ENCODE measurements at regions of chr6 and their contacts with region 1.

Region 1: GRCh38 chr6:25017932-25018567 is 82.3 kb upstream of the RIPOR2 start:
- DNase-seq: peak; percentile 94
- ATAC-seq: peak; percentile 80
- H3K4me3 Mint-ChIP-seq: peak overlapping the region; percentile 11
- H3K27ac Mint-ChIP-seq: peak overlapping the region; percentile 76
- H3K4me1 Mint-ChIP-seq: peaks cover 51% of the 10 kb centered on the region
- H3K27me3 Mint-ChIP-seq: no peaks in the 10 kb centered on the region
- CTCF ChIP-seq: peak; percentile 84

Region 2: GRCh38 chr6:24720604-24721460 is 297.2 kb before region 1 on chr6:
- CTCF ChIA-PET with region 1: interaction called, 4 read pairs
- POLR2A ChIA-PET with region 1: no interaction called
- intact Hi-C with region 1: loop called (anchors 5 kb)
- DNase-seq: peak; percentile 100
- ATAC-seq: peak; percentile 86
- H3K4me3 Mint-ChIP-seq: peak overlapping the region; percentile 98
- H3K27ac Mint-ChIP-seq: peak overlapping the region; percentile 94
- H3K4me1 Mint-ChIP-seq: peaks cover 28% of the 10 kb centered on the region
- H3K27me3 Mint-ChIP-seq: no peaks in the 10 kb centered on the region
- CTCF ChIP-seq: no peak

Region 3: DNA sequence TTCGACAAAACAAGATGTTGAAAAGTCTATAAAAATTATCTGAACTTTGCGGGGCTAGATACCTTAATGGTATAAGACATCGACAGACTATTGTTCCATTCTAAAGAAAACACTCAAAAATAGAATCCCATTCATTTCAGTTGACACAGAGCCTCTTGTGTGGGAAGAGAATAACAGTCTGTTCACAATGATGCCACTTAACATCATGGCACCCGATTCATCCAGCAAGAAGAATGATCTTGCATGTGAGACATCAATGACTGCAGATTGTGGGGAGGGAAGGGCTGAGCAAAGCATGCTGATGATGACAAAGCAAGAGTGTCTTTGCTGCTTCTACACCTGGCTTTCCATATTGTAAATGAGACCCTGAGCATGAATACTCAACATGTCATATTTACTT is 169.6 kb before region 1 on chr6:
- CTCF ChIA-PET with region 1: interaction called, 20 read pairs
- POLR2A ChIA-PET with region 1: no interaction called
- intact Hi-C with region 1: no loop called
- DNase-seq: no peak
- ATAC-seq: no peak
- H3K4me3 Mint-ChIP-seq: no peak overlapping the region
- H3K27ac Mint-ChIP-seq: peak overlapping the region; percentile 31
- H3K4me1 Mint-ChIP-seq: peaks cover 48% of the 10 kb centered on the region
- H3K27me3 Mint-ChIP-seq: no peaks in the 10 kb centered on the region
- CTCF ChIP-seq: no peak

Region 4: GRCh38 chr6:24902782-24903181 is 115.3 kb before region 1 on chr6:
- CTCF ChIA-PET with region 1: interaction called, 16 read pairs
- POLR2A ChIA-PET with region 1: no interaction called
- intact Hi-C with region 1: no loop called
- DNase-seq: no peak
- ATAC-seq: no peak
- H3K4me3 Mint-ChIP-seq: no peak overlapping the region
- H3K27ac Mint-ChIP-seq: peak overlapping the region; percentile 87
- H3K4me1 Mint-ChIP-seq: peaks cover 90% of the 10 kb centered on the region
- H3K27me3 Mint-ChIP-seq: no peaks in the 10 kb centered on the region
- CTCF ChIP-seq: no peak

Region 5: GRCh38 chr6:25006565-25007001 is 11.5 kb before region 1 on chr6:
- CTCF ChIA-PET with region 1: interaction called, 24 read pairs
- POLR2A ChIA-PET with region 1: interaction called, 3 read pairs
- intact Hi-C with region 1: no loop called
- DNase-seq: peak; percentile 75
- ATAC-seq: peak; percentile 72
- H3K4me3 Mint-ChIP-seq: peak overlapping the region; percentile 52
- H3K27ac Mint-ChIP-seq: peak overlapping the region; percentile 94
- H3K4me1 Mint-ChIP-seq: peaks cover 82% of the 10 kb centered on the region
- H3K27me3 Mint-ChIP-seq: no peaks in the 10 kb centered on the region
- CTCF ChIP-seq: no peak

Region 6: GRCh38 chr6:25070547-25071366 is 52.7 kb after region 1 on chr6:
- CTCF ChIA-PET with region 1: interaction called, 44 read pairs
- POLR2A ChIA-PET with region 1: no interaction called
- intact Hi-C with region 1: no loop called
- DNase-seq: peak; percentile 92
- ATAC-seq: peak; percentile 99
- H3K4me3 Mint-ChIP-seq: peak overlapping the region; percentile 68
- H3K27ac Mint-ChIP-seq: peak overlapping the region; percentile 94
- H3K4me1 Mint-ChIP-seq: peaks cover 6% of the 10 kb centered on the region
- H3K27me3 Mint-ChIP-seq: no peaks in the 10 kb centered on the region
- CTCF ChIP-seq: peak; percentile 87

Region 7: GRCh38 chr6:25088513-25088912 is 70.5 kb after region 1 on chr6:
- CTCF ChIA-PET with region 1: no interaction called
- POLR2A ChIA-PET with region 1: no interaction called
- intact Hi-C with region 1: no loop called
- DNase-seq: no peak
- ATAC-seq: no peak
- H3K4me3 Mint-ChIP-seq: no peak overlapping the region
- H3K27ac Mint-ChIP-seq: no peak overlapping the region
- H3K4me1 Mint-ChIP-seq: peaks cover 19% of the 10 kb centered on the region
- H3K27me3 Mint-ChIP-seq: no peaks in the 10 kb centered on the region
- CTCF ChIP-seq: no peak

Region 8: DNA sequence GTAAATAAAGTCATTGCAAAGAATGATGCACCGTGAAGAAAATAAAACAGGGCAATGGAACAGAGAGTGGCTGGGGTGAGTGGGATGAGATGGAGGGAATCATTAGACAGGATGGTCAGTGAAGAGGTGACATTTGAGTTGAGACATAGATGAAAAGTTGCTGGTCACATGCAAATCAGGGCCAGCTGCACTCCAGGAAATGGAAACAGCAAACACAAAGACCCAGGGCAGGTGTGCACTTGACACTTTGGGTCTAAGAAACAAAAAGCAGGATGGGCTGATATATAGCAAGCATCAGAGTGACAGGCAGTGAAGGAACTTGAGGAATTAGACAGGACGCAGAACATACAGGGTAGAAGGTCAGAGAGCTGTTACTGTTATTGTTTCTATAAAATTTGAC is 89.2 kb after region 1 on chr6:
- CTCF ChIA-PET with region 1: no interaction called
- POLR2A ChIA-PET with region 1: no interaction called
- intact Hi-C with region 1: no loop called
- DNase-seq: no peak
- ATAC-seq: no peak
- H3K4me3 Mint-ChIP-seq: no peak overlapping the region
- H3K27ac Mint-ChIP-seq: no peak overlapping the region
- H3K4me1 Mint-ChIP-seq: peaks cover 5% of the 10 kb centered on the region
- H3K27me3 Mint-ChIP-seq: no peaks in the 10 kb centered on the region
- CTCF ChIP-seq: no peak